ENCODE measurements at regions of chr14 and their contacts with region 1.

Region 1: DNA sequence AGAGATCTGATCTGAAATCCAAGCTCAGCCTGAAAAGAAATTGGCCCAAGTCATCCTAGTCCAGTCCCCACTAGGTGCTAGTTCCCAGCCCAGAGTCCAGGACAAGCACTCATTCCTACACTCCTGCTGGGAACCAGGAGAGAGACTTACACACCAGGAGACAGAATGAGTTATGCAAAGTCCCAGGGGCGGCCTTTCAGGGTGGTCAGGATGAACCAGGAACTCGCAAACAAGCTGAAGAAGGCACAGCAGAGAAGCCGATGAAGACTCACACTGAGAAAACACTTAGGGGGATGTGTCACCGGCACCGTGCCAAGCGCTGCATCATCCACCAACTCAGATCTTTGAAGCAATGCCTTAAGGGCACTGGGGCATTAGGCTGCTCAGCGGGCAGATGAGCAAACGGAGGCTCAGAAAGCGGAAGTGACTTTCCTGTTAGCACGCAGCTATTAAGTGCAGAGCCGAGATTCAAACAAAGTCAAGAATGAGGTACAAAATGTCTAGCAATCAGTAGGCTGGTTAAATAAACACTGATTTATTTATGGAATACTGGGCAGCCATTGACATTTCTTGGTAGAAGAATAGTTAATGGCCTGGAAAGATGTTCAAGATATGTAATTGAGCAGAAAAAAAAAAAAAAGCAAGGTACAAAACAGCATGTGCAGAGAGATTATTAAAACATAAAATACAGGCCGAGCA is 78.7 kb downstream of the LRRC74A start:
- DNase-seq: peak; percentile 91
- ATAC-seq: peak; percentile 83
- H3K4me3 ChIP-seq: peak overlapping the region in 1 of 5 experiments; percentile 36
- H3K4me3 Mint-ChIP-seq: peak overlapping the region; percentile 55
- H3K27ac ChIP-seq: peak overlapping the region; percentile 57 to 76
- H3K27ac Mint-ChIP-seq: peak overlapping the region; percentile 89
- H3K4me1 ChIP-seq: peaks cover 29 to 45% of the 10 kb centered on the region in 2 donors
- H3K4me1 Mint-ChIP-seq: peaks cover 34% of the 10 kb centered on the region
- H3K27me3 ChIP-seq: peaks cover 0 to 6% (median 0%) of the 10 kb centered on the region in 4 experiments
- H3K27me3 Mint-ChIP-seq: no peaks in the 10 kb centered on the region
- CTCF ChIP-seq: no peak

Region 2: DNA sequence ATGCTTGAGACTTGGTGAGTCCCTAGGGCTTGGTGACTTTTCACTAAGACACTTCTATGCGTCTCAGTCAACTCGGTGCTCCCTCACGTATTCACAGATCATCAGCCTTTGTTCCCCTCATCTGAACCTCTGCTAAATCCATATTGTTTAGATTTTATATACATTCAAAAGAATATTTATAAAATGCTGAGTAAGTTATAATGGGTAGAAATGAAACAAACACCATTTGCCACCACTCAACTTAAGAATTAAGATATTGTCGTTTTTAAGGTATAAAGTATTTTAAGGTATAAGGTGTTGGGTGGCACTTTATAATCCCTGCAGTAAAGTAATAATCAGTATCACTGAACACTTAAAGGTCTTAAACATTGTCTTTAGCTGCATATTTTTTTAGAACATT is 1140.9 kb before region 1 on chr14:
- CTCF ChIA-PET with region 1: no interaction called
- POLR2A ChIA-PET with region 1: no interaction called
- intact Hi-C with region 1: no loop called
- DNase-seq: no peak
- ATAC-seq: no peak
- H3K4me3 ChIP-seq: no peak overlapping the region
- H3K4me3 Mint-ChIP-seq: no peak overlapping the region
- H3K27ac ChIP-seq: no peak overlapping the region
- H3K27ac Mint-ChIP-seq: no peak overlapping the region
- H3K4me1 ChIP-seq: no peaks in the 10 kb centered on the region
- H3K4me1 Mint-ChIP-seq: peaks cover 1% of the 10 kb centered on the region
- H3K27me3 ChIP-seq: no peaks in the 10 kb centered on the region
- H3K27me3 Mint-ChIP-seq: no peaks in the 10 kb centered on the region
- CTCF ChIP-seq: no peak

Region 3: GRCh38 chr14:76720382-76720813 is 184.5 kb before region 1 on chr14:
- CTCF ChIA-PET with region 1: no interaction called
- POLR2A ChIA-PET with region 1: no interaction called
- intact Hi-C with region 1: no loop called
- DNase-seq: no peak
- ATAC-seq: peak; percentile 21
- H3K4me3 ChIP-seq: no peak overlapping the region
- H3K4me3 Mint-ChIP-seq: peak overlapping the region; percentile 26
- H3K27ac ChIP-seq: peak overlapping the region in 1 of 2 donors; percentile 71
- H3K27ac Mint-ChIP-seq: peak overlapping the region; percentile 47
- H3K4me1 ChIP-seq: peaks cover 0 to 31% of the 10 kb centered on the region in 2 donors
- H3K4me1 Mint-ChIP-seq: peaks cover 21% of the 10 kb centered on the region
- H3K27me3 ChIP-seq: no peaks in the 10 kb centered on the region
- H3K27me3 Mint-ChIP-seq: no peaks in the 10 kb centered on the region
- CTCF ChIP-seq: no peak

Region 4: DNA sequence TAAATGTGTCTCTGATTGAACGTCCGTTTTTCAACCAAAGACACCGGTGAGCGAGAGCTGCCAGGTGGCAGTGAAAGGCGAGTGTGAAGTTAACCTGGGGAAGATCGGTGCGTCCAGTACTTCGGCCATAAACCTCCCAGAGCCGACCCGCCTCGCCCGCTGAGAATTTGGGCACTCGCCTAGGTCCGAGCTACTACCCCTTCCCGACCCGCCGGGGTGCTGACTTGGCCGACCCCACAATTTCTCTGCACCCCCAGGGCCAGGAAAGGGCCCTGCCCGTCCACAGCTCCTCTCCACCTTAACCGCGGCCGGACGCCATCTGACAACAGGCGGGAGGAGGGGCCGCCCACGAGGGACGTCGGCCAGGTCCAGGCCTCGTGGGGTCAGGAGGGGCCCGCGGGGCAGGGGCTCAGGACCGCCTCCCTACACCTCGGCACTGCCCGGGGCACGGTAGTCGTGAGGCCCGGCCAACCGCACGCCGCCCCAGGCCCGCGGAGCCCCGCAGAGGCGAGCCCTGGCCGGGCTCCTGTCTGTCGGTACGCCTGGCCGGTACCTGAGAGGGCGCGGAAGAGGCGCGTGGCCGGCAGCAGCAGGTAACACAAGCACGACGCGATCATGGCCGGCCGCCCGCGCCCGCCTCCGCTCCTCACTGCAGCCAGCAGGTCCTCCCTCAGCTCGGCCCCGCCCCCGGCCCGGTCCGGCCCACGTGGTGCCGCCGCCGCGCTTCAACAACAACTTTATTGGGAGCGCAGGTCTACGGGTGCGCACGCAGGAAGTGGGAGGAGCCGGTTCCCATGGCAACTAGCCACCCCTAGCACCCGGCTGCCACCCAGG is 92.5 kb before region 1 on chr14 and contains the start of gene ANGEL1:
- CTCF ChIA-PET with region 1: no interaction called
- POLR2A ChIA-PET with region 1: no interaction called
- intact Hi-C with region 1: loop called (anchors 1 kb)
- DNase-seq: peak; percentile 99
- ATAC-seq: peak; percentile 95
- H3K4me3 ChIP-seq: peak within 1 kb of the TSS; percentile 31 to 79 (median 72)
- H3K4me3 Mint-ChIP-seq: peak within 1 kb of the TSS; percentile 90
- H3K27ac ChIP-seq: peak within 1 kb of the TSS; percentile 65 to 84
- H3K27ac Mint-ChIP-seq: peak within 1 kb of the TSS; percentile 99
- H3K4me1 ChIP-seq: peaks cover 20 to 25% of the 10 kb centered on the region in 2 donors
- H3K4me1 Mint-ChIP-seq: peaks cover 28% of the 10 kb centered on the region
- H3K27me3 ChIP-seq: peaks cover 0 to 5% (median 2%) of the 10 kb centered on the region in 4 experiments
- H3K27me3 Mint-ChIP-seq: no peaks in the 10 kb centered on the region
- CTCF ChIP-seq: no peak
- total RNA-seq, gene ANGEL1: 25.2 and 27.3 TPM in 2 replicates

Region 5: DNA sequence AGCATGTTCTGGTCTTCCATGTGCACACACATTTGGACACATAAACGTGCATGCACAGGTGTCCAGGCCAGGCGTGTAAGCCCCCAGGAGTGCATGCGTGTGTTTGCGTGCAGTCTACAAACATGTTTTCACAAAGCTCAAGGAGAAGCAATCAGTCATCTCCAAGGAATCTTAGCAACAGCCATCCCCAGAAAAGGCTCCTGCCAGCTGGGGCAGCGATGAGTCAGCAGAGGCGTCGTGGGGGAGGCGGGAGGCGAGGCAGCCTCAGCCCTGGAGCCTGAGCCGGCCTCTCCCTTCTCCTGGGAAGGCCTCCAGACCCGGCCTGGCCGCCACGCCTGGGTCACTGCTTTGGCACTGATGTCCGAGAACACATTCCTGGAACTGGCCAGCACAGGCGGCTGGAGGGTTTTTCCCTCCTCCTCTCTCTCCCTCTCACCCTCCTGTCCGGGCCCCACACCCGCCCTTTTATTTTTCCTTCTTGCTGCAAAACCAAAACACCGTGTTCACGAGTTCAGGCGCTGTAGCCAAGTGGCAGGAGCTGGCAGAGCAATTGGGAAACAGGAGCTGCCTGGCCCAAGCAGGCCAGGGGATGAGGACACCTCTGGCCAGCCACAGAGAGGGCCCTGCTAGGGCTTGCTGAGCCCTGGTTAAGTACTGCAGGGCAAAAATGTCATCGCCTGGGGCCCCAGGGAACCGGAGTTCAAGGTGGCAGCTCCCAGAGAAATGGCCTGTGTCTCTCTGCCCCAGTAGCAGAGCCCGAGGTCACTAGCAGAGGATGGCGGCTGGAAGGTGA is 14.1 kb after region 1 on chr14:
- CTCF ChIA-PET with region 1: interaction called, 43 read pairs
- POLR2A ChIA-PET with region 1: interaction called, 6 read pairs
- intact Hi-C with region 1: no loop called
- DNase-seq: no peak
- ATAC-seq: no peak
- H3K4me3 ChIP-seq: no peak overlapping the region
- H3K4me3 Mint-ChIP-seq: no peak overlapping the region
- H3K27ac ChIP-seq: no peak overlapping the region
- H3K27ac Mint-ChIP-seq: no peak overlapping the region
- H3K4me1 ChIP-seq: peaks cover 24 to 25% of the 10 kb centered on the region in 2 donors
- H3K4me1 Mint-ChIP-seq: peaks cover 20% of the 10 kb centered on the region
- H3K27me3 ChIP-seq: peaks cover 0 to 33% (median 5%) of the 10 kb centered on the region in 4 experiments
- H3K27me3 Mint-ChIP-seq: peaks cover 22% of the 10 kb centered on the region
- CTCF ChIP-seq: no peak

Region 6: GRCh38 chr14:76926521-76927251 is 21.8 kb after region 1 on chr14:
- CTCF ChIA-PET with region 1: no interaction called
- POLR2A ChIA-PET with region 1: interaction called, 4 read pairs
- intact Hi-C with region 1: loop called (anchors 2 kb)
- DNase-seq: peak; percentile 77
- ATAC-seq: peak; percentile 86
- H3K4me3 ChIP-seq: no peak overlapping the region
- H3K4me3 Mint-ChIP-seq: peak overlapping the region; percentile 10
- H3K27ac ChIP-seq: peak overlapping the region in 1 of 2 donors; percentile 12
- H3K27ac Mint-ChIP-seq: peak overlapping the region; percentile 56
- H3K4me1 ChIP-seq: peaks cover 17 to 32% of the 10 kb centered on the region in 2 donors
- H3K4me1 Mint-ChIP-seq: peaks cover 41% of the 10 kb centered on the region
- H3K27me3 ChIP-seq: peaks cover 0 to 10% (median 3%) of the 10 kb centered on the region in 4 experiments
- H3K27me3 Mint-ChIP-seq: peaks cover 10% of the 10 kb centered on the region
- CTCF ChIP-seq: no peak

Region 7: DNA sequence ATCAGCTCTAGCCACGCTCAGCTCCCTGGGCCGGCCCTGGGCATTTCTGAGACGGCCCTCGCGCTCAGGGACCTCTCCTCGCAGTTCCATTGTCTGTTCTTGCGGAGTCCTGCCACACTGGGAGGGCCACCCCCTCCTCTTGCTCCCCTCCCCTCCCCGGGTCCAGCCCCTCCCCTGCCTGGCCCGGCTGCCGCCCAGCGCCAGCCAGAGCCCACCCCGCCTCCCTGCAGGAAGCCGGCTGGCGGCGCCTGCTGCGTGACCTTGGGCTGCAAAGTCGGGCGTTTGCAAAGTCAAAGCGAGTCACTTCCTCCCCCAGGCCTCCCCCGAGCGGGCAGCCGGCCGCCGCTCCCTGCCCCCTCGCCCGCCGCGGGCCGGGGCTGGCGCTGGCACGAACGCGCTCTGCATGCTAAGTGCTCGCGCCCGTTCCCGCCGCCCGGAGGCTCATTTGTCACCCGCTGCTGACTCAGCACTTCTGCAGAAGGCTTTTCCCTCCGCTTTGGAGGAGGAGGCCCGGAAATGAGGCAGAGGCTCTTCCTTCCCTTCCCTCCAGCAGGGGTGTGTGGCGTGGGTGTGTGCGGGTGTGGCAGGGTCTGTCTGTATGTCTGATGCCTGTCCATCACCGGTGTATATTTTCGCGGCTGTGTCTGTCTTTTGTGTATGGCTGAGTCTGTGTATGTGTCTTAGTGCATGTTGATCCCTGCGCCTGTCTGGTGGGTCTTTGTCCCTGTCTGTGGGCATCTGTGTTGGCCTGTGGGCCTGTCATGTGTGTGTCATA is 51.6 kb after region 1 on chr14:
- CTCF ChIA-PET with region 1: interaction called, 5 read pairs
- POLR2A ChIA-PET with region 1: interaction called, 13 read pairs
- intact Hi-C with region 1: loop called (anchors 2 kb)
- DNase-seq: peak; percentile 87
- ATAC-seq: peak; percentile 70
- H3K4me3 ChIP-seq: peak overlapping the region; percentile 23 to 64 (median 59)
- H3K4me3 Mint-ChIP-seq: peak overlapping the region; percentile 95
- H3K27ac ChIP-seq: peak overlapping the region; percentile 89 to 94
- H3K27ac Mint-ChIP-seq: peak overlapping the region; percentile 99
- H3K4me1 ChIP-seq: peaks cover 50 to 75% of the 10 kb centered on the region in 2 donors
- H3K4me1 Mint-ChIP-seq: peaks cover 65% of the 10 kb centered on the region
- H3K27me3 ChIP-seq: no peaks in the 10 kb centered on the region
- H3K27me3 Mint-ChIP-seq: no peaks in the 10 kb centered on the region
- CTCF ChIP-seq: no peak

Region 8: DNA sequence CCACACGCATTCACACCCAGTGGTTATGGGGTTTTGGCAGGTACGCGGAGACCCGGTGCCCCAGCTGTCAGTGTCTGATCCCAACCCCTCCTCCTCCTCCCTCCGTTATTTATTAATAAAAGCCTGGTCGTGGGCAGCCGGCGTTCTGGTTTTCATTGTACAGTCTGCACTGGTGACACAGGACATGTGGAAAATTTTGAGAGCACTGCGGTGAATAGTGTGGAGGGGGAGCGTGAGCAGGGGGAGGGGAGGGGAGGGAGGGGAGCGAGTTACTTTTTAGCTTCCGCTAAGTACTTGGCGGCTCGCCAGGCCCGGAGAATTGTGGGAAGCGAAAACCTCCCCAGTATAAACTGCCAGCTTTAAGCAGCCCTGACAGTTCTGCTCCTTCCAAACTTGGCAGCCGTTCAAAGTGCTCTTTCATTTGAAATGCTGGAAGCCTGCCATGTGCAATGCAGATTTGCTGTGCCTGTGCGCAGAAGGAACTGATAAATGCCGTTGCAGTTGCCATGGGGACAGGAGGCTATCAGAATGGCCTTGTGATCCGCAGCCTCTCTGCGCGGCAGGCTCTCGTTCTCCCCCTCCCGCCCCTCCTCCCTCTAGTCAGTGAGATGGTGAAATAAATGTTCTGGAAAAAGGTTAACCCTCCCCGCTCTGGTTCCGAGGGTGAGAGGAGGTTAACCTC is 135.3 kb after region 1 on chr14:
- CTCF ChIA-PET with region 1: interaction called, 194 read pairs
- POLR2A ChIA-PET with region 1: interaction called, 10 read pairs
- intact Hi-C with region 1: no loop called
- DNase-seq: peak; percentile 94
- ATAC-seq: peak; percentile 72
- H3K4me3 ChIP-seq: peak overlapping the region; percentile 11 to 70 (median 56)
- H3K4me3 Mint-ChIP-seq: peak overlapping the region; percentile 88
- H3K27ac ChIP-seq: peak overlapping the region; percentile 89 to 93
- H3K27ac Mint-ChIP-seq: peak overlapping the region; percentile 98
- H3K4me1 ChIP-seq: peaks cover 71 to 86% of the 10 kb centered on the region in 2 donors
- H3K4me1 Mint-ChIP-seq: peaks cover 79% of the 10 kb centered on the region
- H3K27me3 ChIP-seq: no peaks in the 10 kb centered on the region
- H3K27me3 Mint-ChIP-seq: no peaks in the 10 kb centered on the region
- CTCF ChIP-seq: no peak

Measured in B cell (primary cell).